GM18951 (cell line): ENCODE measurements at regions of chr1 and their contacts with region 1.

Region 1: GRCh38 chr1:201042779-201043461 is 19.4 kb upstream of the KIF21B start:
- POLR2A ChIP-seq: no peak

Region 2: GRCh38 chr1:200979574-200980451 is 63.1 kb before region 1 on chr1:
- in situ Hi-C with region 1: loop called (anchors 5 kb)
- POLR2A ChIP-seq: no peak